Calu3 (cell line): ENCODE measurements at regions of chrX and their contacts with region 1.

Region 1: GRCh38 chrX:132292793-132293192 is 73.5 kb upstream of the RAP2C start:
- DNase-seq: peak; percentile 22
- H3K4me3 Mint-ChIP-seq: no peak overlapping the region
- H3K27ac Mint-ChIP-seq: no peak overlapping the region
- H3K4me1 Mint-ChIP-seq: no peaks in the 10 kb centered on the region
- H3K27me3 Mint-ChIP-seq: peaks cover 8% of the 10 kb centered on the region
- CTCF ChIP-seq: no peak

Region 2: GRCh38 chrX:131841496-131842410 is 451.0 kb before region 1 on chrX:
- CTCF ChIA-PET with region 1: no interaction called
- intact Hi-C with region 1: loop called (anchors 5 kb)
- DNase-seq: peak; percentile 51
- H3K4me3 Mint-ChIP-seq: peak overlapping the region; percentile 21
- H3K27ac Mint-ChIP-seq: no peak overlapping the region
- H3K4me1 Mint-ChIP-seq: no peaks in the 10 kb centered on the region
- H3K27me3 Mint-ChIP-seq: no peaks in the 10 kb centered on the region
- CTCF ChIP-seq: peak; percentile 66

Region 3: DNA sequence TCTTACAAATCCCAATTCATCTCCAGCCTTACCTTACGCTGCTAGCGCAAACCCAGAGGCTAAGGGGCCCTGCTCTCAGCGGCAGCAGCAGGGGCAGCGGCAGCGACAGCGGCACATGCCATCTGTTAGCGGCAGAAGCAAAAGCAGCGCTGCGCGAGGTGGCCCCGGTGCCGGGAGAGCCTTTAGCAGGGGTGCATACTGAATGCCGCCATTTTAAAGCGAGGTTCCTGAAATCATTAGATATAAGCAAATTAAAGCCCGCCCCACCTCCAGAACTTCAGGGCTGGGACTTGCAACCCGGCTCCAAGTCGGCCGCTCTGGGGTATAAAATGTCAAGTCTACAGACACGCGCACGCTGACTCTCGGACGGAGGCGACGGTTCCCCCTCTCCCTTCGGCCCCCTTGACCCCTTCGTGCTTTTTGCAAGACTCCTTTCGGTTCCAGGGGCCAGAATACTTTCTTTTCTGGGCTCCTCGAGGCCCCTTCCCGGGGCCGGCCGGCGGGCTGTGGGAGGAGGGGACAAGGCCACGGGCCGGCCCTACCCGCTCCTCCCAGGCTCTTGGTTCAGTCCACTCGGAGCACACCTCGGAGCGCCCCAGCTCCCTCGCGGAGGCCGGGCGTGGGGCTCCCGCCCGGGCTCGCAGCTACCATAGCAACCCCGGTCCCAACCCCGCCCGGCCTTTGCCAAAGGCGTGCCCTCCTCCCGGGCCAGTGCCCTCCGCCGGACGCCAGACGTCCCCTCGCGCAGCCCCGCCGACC is 196.2 kb after region 1 on chrX and contains the start of gene MBNL3:
- CTCF ChIA-PET with region 1: interaction called, 3 read pairs
- intact Hi-C with region 1: loop called (anchors 2 kb)
- DNase-seq: peak; percentile 69
- H3K4me3 Mint-ChIP-seq: peak within 1 kb of the TSS; percentile 71
- H3K27ac Mint-ChIP-seq: peak within 1 kb of the TSS; percentile 79
- H3K4me1 Mint-ChIP-seq: peaks cover 10% of the 10 kb centered on the region
- H3K27me3 Mint-ChIP-seq: no peaks in the 10 kb centered on the region
- CTCF ChIP-seq: no peak
- total RNA-seq, gene MBNL3: 18.9 and 21.0 TPM in 2 replicates

Region 4: GRCh38 chrX:132592880-132593279 is 300.1 kb after region 1 on chrX:
- CTCF ChIA-PET with region 1: interaction called, 9 read pairs
- intact Hi-C with region 1: loop called (anchors 1 kb)
- DNase-seq: peak; percentile 20
- H3K4me3 Mint-ChIP-seq: no peak overlapping the region
- H3K27ac Mint-ChIP-seq: no peak overlapping the region
- H3K4me1 Mint-ChIP-seq: no peaks in the 10 kb centered on the region
- H3K27me3 Mint-ChIP-seq: no peaks in the 10 kb centered on the region
- CTCF ChIP-seq: peak; percentile 33